ENCODE measurements at regions of chr1 and their contacts with region 1.

Region 1: GRCh38 chr1:197224160-197224559 is 43.9 kb upstream of the CRB1 start:
- DNase-seq: no peak

Region 2: DNA sequence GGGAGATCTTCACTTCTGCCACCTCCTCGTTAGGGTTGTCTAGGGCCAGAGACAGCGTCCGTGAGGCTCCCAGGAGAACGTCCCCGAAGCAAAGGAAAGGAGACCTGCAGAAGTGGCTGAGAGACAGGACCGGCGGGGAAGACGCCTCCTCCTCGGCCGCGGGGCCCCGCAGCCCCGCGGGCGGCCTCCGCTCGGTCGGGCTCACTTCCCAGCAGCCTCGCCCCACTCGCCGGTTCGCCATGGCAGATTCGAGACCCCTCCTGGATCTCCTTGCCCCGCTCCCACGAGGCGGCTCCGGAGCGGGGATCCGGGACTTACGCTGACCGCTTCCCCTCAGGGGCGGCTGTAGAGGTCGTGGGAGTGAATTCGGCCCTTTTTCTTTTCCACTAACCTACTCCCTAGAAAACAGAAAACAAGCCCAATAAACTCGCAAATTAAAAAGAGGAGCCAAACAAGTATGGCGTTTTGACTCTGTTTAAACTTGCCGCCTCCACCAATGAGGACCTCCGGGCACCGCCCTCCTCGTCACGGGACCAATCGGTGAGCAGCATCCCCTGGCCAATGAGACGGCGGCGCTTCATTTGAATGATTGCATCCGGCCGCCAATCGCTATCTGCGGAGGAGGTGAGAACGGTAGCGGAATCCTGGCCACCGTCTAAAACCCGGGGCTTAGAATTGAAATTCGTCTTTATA is 77.8 kb before region 1 on chr1 and contains the start of gene ASPM:
- intact Hi-C with region 1: no loop called
- DNase-seq: peak; percentile 97
- total RNA-seq, gene ASPM: 0.57 TPM

Region 3: GRCh38 chr1:197339106-197340060 is 115.2 kb after region 1 on chr1:
- intact Hi-C with region 1: loop called (anchors 10 kb)
- DNase-seq: no peak

Measured in cardiac septum (tissue), 1 donor.